HEK293 (cell line): ENCODE measurements at regions of chr6 and their contacts with region 1.

Region 1: GRCh38 chr6:107459283-107460082 is at the start of gene PDSS2:
- H3K4me3 ChIP-seq: peak within 1 kb of the TSS; percentile 70
- H3K27ac ChIP-seq: peak within 1 kb of the TSS; percentile 91
- H3K4me1 ChIP-seq: no peaks in the 10 kb centered on the region; the same call in 1 of the 2 replicates
- CTCF ChIP-seq: peak; percentile 95

Region 2: GRCh38 chr6:106397431-106397830 is 1062.1 kb before region 1 on chr6:
- CTCF ChIA-PET with region 1: no interaction called
- POLR2A ChIA-PET with region 1: no interaction called
- H3K4me3 ChIP-seq: no peak overlapping the region
- H3K27ac ChIP-seq: no peak overlapping the region
- H3K4me1 ChIP-seq: no peaks in the 10 kb centered on the region
- CTCF ChIP-seq: no peak

Region 3: GRCh38 chr6:107114213-107114905 is 345.1 kb before region 1 on chr6:
- CTCF ChIA-PET with region 1: interaction called, 3 read pairs
- POLR2A ChIA-PET with region 1: interaction called, 10 read pairs
- H3K4me3 ChIP-seq: peak overlapping the region; percentile 74
- H3K27ac ChIP-seq: peak overlapping the region; percentile 83
- H3K4me1 ChIP-seq: peaks cover 4% of the 10 kb centered on the region; the same call in 1 of the 2 replicates
- CTCF ChIP-seq: 0 out of 2 replicates have a peak, but pooled peaks have one; percentile 29

Region 4: GRCh38 chr6:107435798-107436197 is 23.7 kb before region 1 on chr6:
- CTCF ChIA-PET with region 1: interaction called, 3 read pairs
- POLR2A ChIA-PET with region 1: interaction called, 11 read pairs
- H3K4me3 ChIP-seq: no peak overlapping the region
- H3K27ac ChIP-seq: no peak overlapping the region
- H3K4me1 ChIP-seq: no peaks in the 10 kb centered on the region
- CTCF ChIP-seq: no peak

Region 5: DNA sequence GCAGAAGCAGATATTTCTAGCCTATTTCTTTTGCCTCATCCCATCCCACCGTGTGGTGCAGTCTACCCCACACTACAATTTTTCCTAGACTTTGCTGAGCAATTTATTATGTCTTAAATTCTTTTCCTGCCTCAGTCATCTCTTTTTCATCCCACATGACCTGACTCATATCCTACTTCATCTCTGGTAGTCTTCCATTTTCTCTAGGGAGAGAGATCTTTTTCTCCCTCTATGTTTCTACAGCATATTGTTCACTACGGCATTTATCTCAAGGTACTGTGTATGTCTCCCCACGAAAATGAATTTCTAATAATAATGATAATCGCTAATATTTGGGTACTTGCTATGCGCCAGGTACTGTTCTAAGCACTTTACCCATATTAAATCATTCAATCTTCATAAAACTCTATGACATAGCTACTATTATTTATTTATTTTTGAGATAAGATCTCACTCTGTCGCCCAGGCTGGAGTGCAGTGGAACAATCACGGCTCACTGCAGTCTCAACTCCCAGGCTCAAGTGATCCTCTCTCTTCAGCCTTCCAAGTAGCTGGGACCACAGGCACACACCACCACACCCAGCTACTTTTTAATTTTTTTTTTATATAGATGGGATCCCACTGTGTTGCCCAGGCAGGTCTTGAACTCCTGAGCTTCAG is 15.7 kb before region 1 on chr6:
- CTCF ChIA-PET with region 1: interaction called, 3 read pairs
- POLR2A ChIA-PET with region 1: interaction called, 15 read pairs
- H3K4me3 ChIP-seq: no peak overlapping the region
- H3K27ac ChIP-seq: no peak overlapping the region
- H3K4me1 ChIP-seq: no peaks in the 10 kb centered on the region
- CTCF ChIP-seq: no peak

Region 6: GRCh38 chr6:107473660-107474059 is 14.2 kb after region 1 on chr6:
- CTCF ChIA-PET with region 1: interaction called, 13 read pairs
- POLR2A ChIA-PET with region 1: interaction called, 16 read pairs
- H3K4me3 ChIP-seq: no peak overlapping the region
- H3K27ac ChIP-seq: no peak overlapping the region
- H3K4me1 ChIP-seq: peaks cover 10% of the 10 kb centered on the region; the same call in 1 of the 2 replicates
- CTCF ChIP-seq: no peak

Region 7: GRCh38 chr6:107489636-107490565 is 30.4 kb after region 1 on chr6 and contains the start of gene SOBP:
- CTCF ChIA-PET with region 1: interaction called, 21 read pairs
- POLR2A ChIA-PET with region 1: interaction called, 104 read pairs
- H3K4me3 ChIP-seq: peak within 1 kb of the TSS; percentile 88
- H3K27ac ChIP-seq: peak within 1 kb of the TSS; percentile 94
- H3K4me1 ChIP-seq: peaks cover 29% of the 10 kb centered on the region
- CTCF ChIP-seq: 0 out of 2 replicates have a peak, but pooled peaks have one; percentile 17

Region 8: DNA sequence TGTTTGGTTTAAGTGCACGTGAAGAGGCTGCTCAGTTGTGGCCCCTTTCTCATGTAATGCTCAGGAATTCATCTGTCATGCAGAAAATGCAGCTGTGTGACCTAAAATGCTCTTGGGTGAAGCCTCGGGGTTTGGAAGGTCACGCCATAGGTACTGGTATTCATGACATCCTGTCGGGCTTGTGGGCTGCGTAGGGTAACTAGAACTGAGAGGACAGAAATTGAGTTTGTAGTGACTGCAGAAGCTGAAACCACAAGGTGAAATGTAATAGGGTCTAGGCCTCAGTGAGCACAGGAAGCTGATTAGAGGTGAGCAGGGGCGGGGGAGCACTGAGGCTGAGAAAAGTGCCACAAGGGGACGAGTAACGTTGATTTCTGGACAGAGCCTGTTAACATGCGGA is 159.2 kb after region 1 on chr6:
- CTCF ChIA-PET with region 1: no interaction called
- POLR2A ChIA-PET with region 1: no interaction called
- H3K4me3 ChIP-seq: no peak overlapping the region
- H3K27ac ChIP-seq: no peak overlapping the region
- H3K4me1 ChIP-seq: no peaks in the 10 kb centered on the region
- CTCF ChIP-seq: no peak

Region 9: GRCh38 chr6:107645800-107646575 is 186.5 kb after region 1 on chr6:
- CTCF ChIA-PET with region 1: no interaction called
- POLR2A ChIA-PET with region 1: no interaction called
- H3K4me3 ChIP-seq: no peak overlapping the region
- H3K27ac ChIP-seq: no peak overlapping the region
- H3K4me1 ChIP-seq: peaks cover 8% of the 10 kb centered on the region; the same call in 1 of the 2 replicates
- CTCF ChIP-seq: no peak

Region 10: GRCh38 chr6:107666084-107666981 is 206.8 kb after region 1 on chr6:
- CTCF ChIA-PET with region 1: no interaction called
- POLR2A ChIA-PET with region 1: interaction called, 11 read pairs
- H3K4me3 ChIP-seq: no peak overlapping the region
- H3K27ac ChIP-seq: peak overlapping the region; percentile 94
- H3K4me1 ChIP-seq: peaks cover 35% of the 10 kb centered on the region
- CTCF ChIP-seq: no peak